ENCODE measurements at regions of chr7 and their contacts with region 1.

Region 1: GRCh38 chr7:65750511-65751344 is 122.1 kb upstream of the VKORC1L1 start:
- DNase-seq: peak; percentile 92
- H3K4me3 ChIP-seq: peak overlapping the region; percentile 27 to 97 (median 83)
- H3K27ac ChIP-seq: peak overlapping the region; percentile 37
- H3K4me1 ChIP-seq: peaks cover 15% of the 10 kb centered on the region
- H3K27me3 ChIP-seq: no peaks in the 10 kb centered on the region
- CTCF ChIP-seq: no peak
- POLR2A ChIP-seq: peak; percentile 85

Region 2: DNA sequence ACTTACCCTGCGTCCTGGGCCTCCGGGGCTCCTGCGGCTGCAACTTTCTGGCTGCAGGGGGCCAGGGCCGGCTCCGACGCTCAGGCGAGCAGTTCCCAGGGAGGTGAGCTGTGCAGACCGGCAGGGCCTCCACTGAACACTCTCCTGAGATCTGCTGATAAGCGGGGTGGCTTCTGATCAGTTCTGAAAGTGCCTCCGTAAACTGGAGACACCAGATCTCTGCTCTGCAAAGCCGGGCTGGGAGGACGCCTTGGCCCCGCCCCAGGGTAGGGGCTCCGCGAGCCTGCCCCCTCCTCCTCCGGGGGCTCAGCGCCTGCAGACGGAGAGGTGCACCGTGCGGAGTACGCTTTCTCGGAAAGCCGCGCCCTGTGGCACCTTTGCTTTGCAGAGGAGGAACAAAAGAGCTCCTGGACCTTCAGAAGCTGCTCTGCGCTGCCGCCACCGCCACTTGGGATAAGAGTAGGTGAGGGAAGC is 19.1 kb before region 1 on chr7:
- CTCF ChIA-PET with region 1: interaction called, 15 read pairs
- POLR2A ChIA-PET with region 1: no interaction called
- dilution Hi-C with region 1: no loop called
- intact Hi-C with region 1: loop called (anchors 2 kb)
- DNase-seq: peak; percentile 59
- H3K4me3 ChIP-seq: peak overlapping the region; percentile 11 to 44 (median 33)
- H3K27ac ChIP-seq: no peak overlapping the region
- H3K4me1 ChIP-seq: peaks cover 4% of the 10 kb centered on the region
- H3K27me3 ChIP-seq: no peaks in the 10 kb centered on the region
- CTCF ChIP-seq: peak; percentile 39 to 63
- POLR2A ChIP-seq: no peak

Region 3: GRCh38 chr7:65809982-65810288 is 59.2 kb after region 1 on chr7:
- CTCF ChIA-PET with region 1: no interaction called
- POLR2A ChIA-PET with region 1: no interaction called
- dilution Hi-C with region 1: no loop called
- intact Hi-C with region 1: loop called (anchors 10 kb)
- DNase-seq: no peak
- H3K4me3 ChIP-seq: no peak overlapping the region
- H3K27ac ChIP-seq: no peak overlapping the region
- H3K4me1 ChIP-seq: no peaks in the 10 kb centered on the region
- H3K27me3 ChIP-seq: no peaks in the 10 kb centered on the region
- CTCF ChIP-seq: no peak
- POLR2A ChIP-seq: no peak

Region 4: DNA sequence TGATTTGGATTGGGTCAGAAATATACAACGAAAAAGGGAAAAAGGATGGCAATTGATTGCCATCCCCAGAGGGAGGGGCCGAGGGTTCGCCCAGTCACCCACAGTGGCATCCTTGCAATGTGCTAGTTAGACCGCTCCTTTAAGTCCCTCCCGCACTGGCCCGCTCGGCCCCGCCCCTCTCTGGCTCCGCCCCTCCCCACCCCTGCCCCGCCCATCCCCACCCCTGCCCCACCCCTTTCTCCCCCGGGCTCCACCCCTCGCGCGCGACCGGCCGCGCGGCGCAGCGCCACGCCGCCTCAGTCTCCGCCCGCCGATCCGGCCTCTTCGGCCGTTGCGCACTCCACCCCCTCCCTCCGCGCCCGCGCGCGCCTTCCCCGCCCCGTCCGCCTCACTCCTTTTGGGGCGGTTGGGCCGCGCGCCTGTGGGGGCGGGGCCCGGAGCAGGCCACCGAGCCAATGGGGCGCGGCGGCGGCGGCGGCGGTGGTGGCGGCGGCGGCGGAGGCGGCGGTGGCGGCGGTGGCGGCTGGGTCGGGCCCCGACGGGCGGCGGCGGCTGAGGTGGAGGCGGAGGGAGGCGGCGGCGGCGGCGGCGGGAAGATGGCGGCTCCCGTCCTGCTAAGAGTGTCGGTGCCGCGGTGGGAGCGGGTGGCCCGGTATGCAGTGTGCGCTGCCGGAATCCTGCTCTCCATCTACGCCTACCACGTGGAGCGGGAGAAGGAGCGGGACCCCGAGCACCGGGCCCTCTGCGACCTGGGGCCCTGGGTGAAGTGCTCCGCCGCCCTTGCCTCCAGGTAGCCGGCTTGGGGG is 122.3 kb after region 1 on chr7 and contains the start of gene VKORC1L1:
- CTCF ChIA-PET with region 1: no interaction called
- POLR2A ChIA-PET with region 1: no interaction called
- dilution Hi-C with region 1: no loop called
- intact Hi-C with region 1: loop called (anchors 1 kb)
- DNase-seq: peak; percentile 91
- H3K4me3 ChIP-seq: peak within 1 kb of the TSS; percentile 50 to 87 (median 53)
- H3K27ac ChIP-seq: peak within 1 kb of the TSS; percentile 48
- H3K4me1 ChIP-seq: no peaks in the 10 kb centered on the region
- H3K27me3 ChIP-seq: no peaks in the 10 kb centered on the region
- CTCF ChIP-seq: no peak
- POLR2A ChIP-seq: no peak
- total RNA-seq, gene VKORC1L1: 36.6 and 36.7 TPM in 2 replicates

Region 5: GRCh38 chr7:65981965-65982792 is 231.5 kb after region 1 on chr7 and contains the start of gene GUSB:
- CTCF ChIA-PET with region 1: no interaction called
- POLR2A ChIA-PET with region 1: no interaction called
- dilution Hi-C with region 1: no loop called
- intact Hi-C with region 1: loop called (anchors 10 kb)
- DNase-seq: peak; percentile 86
- H3K4me3 ChIP-seq: peak within 1 kb of the TSS; percentile 53 to 84 (median 69)
- H3K27ac ChIP-seq: peak within 1 kb of the TSS; percentile 78
- H3K4me1 ChIP-seq: peaks cover 9% of the 10 kb centered on the region
- H3K27me3 ChIP-seq: no peaks in the 10 kb centered on the region
- CTCF ChIP-seq: no peak
- POLR2A ChIP-seq: peak; percentile 75
- total RNA-seq, gene GUSB: 46.4 and 55.7 TPM in 2 replicates

Measured in endothelial cell of umbilical vein (primary cell).